ENCODE measurements at regions of chr1 and their contacts with region 1.

Region 1: GRCh38 chr1:13730751-13731482 is 30.9 kb downstream of the PRDM2 start:
- DNase-seq: peak; percentile 92
- H3K4me3 Mint-ChIP-seq: peak overlapping the region; percentile 84
- H3K27ac Mint-ChIP-seq: peak overlapping the region; percentile 99
- H3K4me1 Mint-ChIP-seq: peaks cover 58% of the 10 kb centered on the region
- H3K27me3 Mint-ChIP-seq: no peaks in the 10 kb centered on the region

Region 2: GRCh38 chr1:13699936-13700520 is 30.9 kb before region 1 on chr1 and contains the start of gene PRDM2:
- CTCF ChIA-PET with region 1: interaction called, 12 read pairs
- intact Hi-C with region 1: loop called (anchors 1 kb)
- DNase-seq: peak; percentile 49
- H3K4me3 Mint-ChIP-seq: peak within 1 kb of the TSS; percentile 88
- H3K27ac Mint-ChIP-seq: peak within 1 kb of the TSS; percentile 94
- H3K4me1 Mint-ChIP-seq: peaks cover 42% of the 10 kb centered on the region
- H3K27me3 Mint-ChIP-seq: no peaks in the 10 kb centered on the region
- total RNA-seq, gene PRDM2: 33.8 to 37.3 TPM

Region 3: GRCh38 chr1:13748610-13749505 is 17.9 kb after region 1 on chr1:
- CTCF ChIA-PET with region 1: interaction called, 6 read pairs
- intact Hi-C with region 1: loop called (anchors 1 kb)
- DNase-seq: peak; percentile 94
- H3K4me3 Mint-ChIP-seq: peak overlapping the region; percentile 81
- H3K27ac Mint-ChIP-seq: peak overlapping the region; percentile 85
- H3K4me1 Mint-ChIP-seq: peaks cover 44% of the 10 kb centered on the region
- H3K27me3 Mint-ChIP-seq: no peaks in the 10 kb centered on the region

Region 4: DNA sequence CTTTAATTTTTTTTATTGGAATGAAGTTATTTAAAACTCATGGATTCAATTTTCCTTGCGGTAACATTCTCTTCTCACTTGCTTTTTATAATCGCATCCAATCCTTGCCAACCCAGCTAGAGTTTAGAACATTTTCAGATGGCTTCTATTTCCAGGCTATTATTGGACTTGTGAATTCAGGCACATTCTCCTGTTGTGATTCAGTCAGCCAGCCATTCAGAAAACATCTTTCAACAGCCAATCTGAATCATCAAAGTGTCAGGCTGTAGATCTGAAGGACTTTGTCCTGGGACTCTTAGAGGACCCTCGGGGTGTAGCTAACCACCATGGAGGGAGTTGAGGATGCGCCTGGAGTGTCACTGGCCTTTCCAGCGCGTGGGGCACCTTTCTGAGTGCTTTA is 61.5 kb after region 1 on chr1:
- CTCF ChIA-PET with region 1: no interaction called
- intact Hi-C with region 1: loop called (anchors 5 kb)
- DNase-seq: no peak
- H3K4me3 Mint-ChIP-seq: no peak overlapping the region
- H3K27ac Mint-ChIP-seq: no peak overlapping the region
- H3K4me1 Mint-ChIP-seq: peaks cover 76% of the 10 kb centered on the region
- H3K27me3 Mint-ChIP-seq: no peaks in the 10 kb centered on the region